ENCODE measurements at regions of chr19 and their contacts with region 1.

Region 1: GRCh38 chr19:47243776-47244547 is 12.4 kb upstream of the CCDC9 start:
- DNase-seq: peak; percentile 85 to 91 (median 87)
- H3K4me3 ChIP-seq: peak overlapping the region; percentile 21 to 37
- H3K4me3 Mint-ChIP-seq: peak overlapping the region; percentile 63 to 89 (median 84)
- H3K27ac ChIP-seq: peak overlapping the region; percentile 40
- H3K27ac Mint-ChIP-seq: peak overlapping the region in 6 of 7 donors; percentile 86 to 99 (median 96)
- H3K4me1 ChIP-seq: peaks cover 48% of the 10 kb centered on the region
- H3K4me1 Mint-ChIP-seq: peaks cover 11 to 33% (median 22%) of the 10 kb centered on the region in 4 donors
- H3K27me3 ChIP-seq: no peaks in the 10 kb centered on the region
- H3K27me3 Mint-ChIP-seq: no peaks in the 10 kb centered on the region

Region 2: GRCh38 chr19:46076951-46077816 is 1166.8 kb before region 1 on chr19:
- CTCF ChIA-PET with region 1: no interaction called
- POLR2A ChIA-PET with region 1: no interaction called
- intact Hi-C with region 1: no loop called
- DNase-seq: peak in 3 of 5 donors; percentile 2 to 36 (median 12)
- H3K4me3 ChIP-seq: no peak overlapping the region
- H3K4me3 Mint-ChIP-seq: peak overlapping the region in 4 of 8 donors; percentile 27 to 50 (median 30)
- H3K27ac ChIP-seq: no peak overlapping the region
- H3K27ac Mint-ChIP-seq: peak overlapping the region in 1 of 7 donors; percentile 31
- H3K4me1 ChIP-seq: peaks cover 12% of the 10 kb centered on the region
- H3K4me1 Mint-ChIP-seq: peaks cover 4 to 10% (median 6%) of the 10 kb centered on the region in 4 donors
- H3K27me3 ChIP-seq: peaks cover 16% of the 10 kb centered on the region
- H3K27me3 Mint-ChIP-seq: peaks cover 59% of the 10 kb centered on the region in 2 donors

Region 3: GRCh38 chr19:46860125-46860845 is 383.7 kb before region 1 on chr19:
- CTCF ChIA-PET with region 1: no interaction called
- POLR2A ChIA-PET with region 1: no interaction called
- intact Hi-C with region 1: loop called (anchors 5 kb)
- DNase-seq: peak; percentile 93 to 96 (median 94)
- H3K4me3 ChIP-seq: peak overlapping the region; percentile 42 to 78
- H3K4me3 Mint-ChIP-seq: peak overlapping the region; percentile 91 to 98 (median 95)
- H3K27ac ChIP-seq: peak overlapping the region; percentile 79
- H3K27ac Mint-ChIP-seq: peak overlapping the region; percentile 94 to 99 (median 97)
- H3K4me1 ChIP-seq: peaks cover 62% of the 10 kb centered on the region
- H3K4me1 Mint-ChIP-seq: peaks cover 19 to 22% (median 19%) of the 10 kb centered on the region in 4 donors
- H3K27me3 ChIP-seq: no peaks in the 10 kb centered on the region
- H3K27me3 Mint-ChIP-seq: no peaks in the 10 kb centered on the region

Region 4: GRCh38 chr19:47130591-47131227 is 113.3 kb before region 1 on chr19 and contains the start of gene SAE1:
- CTCF ChIA-PET with region 1: interaction called, 199 read pairs
- POLR2A ChIA-PET with region 1: interaction called, 17 read pairs
- intact Hi-C with region 1: loop called (anchors 1 kb)
- DNase-seq: peak; percentile 88 to 91 (median 90)
- H3K4me3 ChIP-seq: peak within 1 kb of the TSS; percentile 82 to 89
- H3K4me3 Mint-ChIP-seq: peak within 1 kb of the TSS; percentile 97 to 100 (median 100)
- H3K27ac ChIP-seq: peak within 1 kb of the TSS; percentile 73
- H3K27ac Mint-ChIP-seq: peak within 1 kb of the TSS; percentile 93 to 99 (median 98)
- H3K4me1 ChIP-seq: peaks cover 43% of the 10 kb centered on the region
- H3K4me1 Mint-ChIP-seq: peaks cover 33 to 55% (median 44%) of the 10 kb centered on the region in 4 donors
- H3K27me3 ChIP-seq: no peaks in the 10 kb centered on the region
- H3K27me3 Mint-ChIP-seq: no peaks in the 10 kb centered on the region
- total RNA-seq, gene SAE1: 35.3 to 36.0 TPM

Region 5: GRCh38 chr19:47157431-47158321 is 86.3 kb before region 1 on chr19:
- CTCF ChIA-PET with region 1: interaction called, 609 read pairs
- POLR2A ChIA-PET with region 1: interaction called, 46 read pairs
- intact Hi-C with region 1: no loop called
- DNase-seq: peak; percentile 45 to 56 (median 53)
- H3K4me3 ChIP-seq: peak overlapping the region; percentile 17 to 40
- H3K4me3 Mint-ChIP-seq: peak overlapping the region; percentile 62 to 90 (median 84)
- H3K27ac ChIP-seq: peak overlapping the region; percentile 43
- H3K27ac Mint-ChIP-seq: peak overlapping the region; percentile 76 to 98 (median 95)
- H3K4me1 ChIP-seq: peaks cover 75% of the 10 kb centered on the region
- H3K4me1 Mint-ChIP-seq: peaks cover 40 to 74% (median 60%) of the 10 kb centered on the region in 4 donors
- H3K27me3 ChIP-seq: no peaks in the 10 kb centered on the region
- H3K27me3 Mint-ChIP-seq: no peaks in the 10 kb centered on the region

Region 6: GRCh38 chr19:47203254-47203653 is 40.7 kb before region 1 on chr19:
- CTCF ChIA-PET with region 1: interaction called, 499 read pairs
- POLR2A ChIA-PET with region 1: interaction called, 6 read pairs
- intact Hi-C with region 1: no loop called
- DNase-seq: no peak
- H3K4me3 ChIP-seq: no peak overlapping the region
- H3K4me3 Mint-ChIP-seq: no peak overlapping the region
- H3K27ac ChIP-seq: no peak overlapping the region
- H3K27ac Mint-ChIP-seq: peak overlapping the region in 2 of 7 donors; percentile 10 to 26
- H3K4me1 ChIP-seq: no peaks in the 10 kb centered on the region
- H3K4me1 Mint-ChIP-seq: peaks cover 2 to 12% (median 9%) of the 10 kb centered on the region in 4 donors
- H3K27me3 ChIP-seq: no peaks in the 10 kb centered on the region
- H3K27me3 Mint-ChIP-seq: no peaks in the 10 kb centered on the region

Region 7: DNA sequence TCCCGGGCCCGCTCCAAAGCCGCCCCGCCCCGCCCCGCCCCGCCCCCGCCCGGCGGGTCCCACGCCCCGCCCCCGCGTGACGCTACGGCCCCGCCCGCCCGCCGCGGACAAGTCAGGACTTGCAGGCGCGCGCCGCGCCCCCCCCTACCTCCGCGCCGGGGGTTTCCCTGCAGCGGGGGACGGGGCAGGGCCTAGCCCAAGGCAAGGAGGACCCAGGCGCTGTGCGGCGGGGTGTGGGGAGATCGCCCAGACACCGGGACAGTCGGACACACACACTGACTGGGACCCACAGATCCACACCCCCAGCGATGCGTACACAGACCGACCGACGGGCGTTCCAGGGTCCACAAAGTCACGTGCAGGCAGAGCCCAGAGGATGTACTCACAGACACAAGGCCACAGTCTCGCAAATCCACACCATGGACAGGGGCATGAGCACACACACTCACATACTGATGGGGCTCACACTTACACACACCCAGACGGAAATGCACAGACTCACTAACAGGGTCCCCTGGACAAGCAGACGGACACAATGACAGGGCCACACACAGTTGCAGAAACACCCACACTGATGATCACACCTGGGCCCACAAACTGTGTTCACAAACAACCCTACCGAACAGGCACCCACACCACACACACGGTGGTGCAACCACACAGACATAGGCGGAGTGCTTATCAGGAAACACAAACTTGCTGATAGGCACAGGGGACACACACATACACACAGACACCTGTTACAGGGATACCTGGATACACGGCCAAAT is 12.6 kb before region 1 on chr19:
- CTCF ChIA-PET with region 1: interaction called, 62 read pairs
- POLR2A ChIA-PET with region 1: interaction called, 156 read pairs
- intact Hi-C with region 1: loop called (anchors 1 kb)
- DNase-seq: peak; percentile 88 to 96 (median 90)
- H3K4me3 ChIP-seq: peak overlapping the region in 1 of 2 donors; percentile 53
- H3K4me3 Mint-ChIP-seq: peak overlapping the region; percentile 73 to 88 (median 83)
- H3K27ac ChIP-seq: peak overlapping the region; percentile 76
- H3K27ac Mint-ChIP-seq: peak overlapping the region; percentile 71 to 97 (median 93)
- H3K4me1 ChIP-seq: peaks cover 51% of the 10 kb centered on the region
- H3K4me1 Mint-ChIP-seq: peaks cover 15 to 32% (median 22%) of the 10 kb centered on the region in 4 donors
- H3K27me3 ChIP-seq: no peaks in the 10 kb centered on the region
- H3K27me3 Mint-ChIP-seq: no peaks in the 10 kb centered on the region

Region 8: DNA sequence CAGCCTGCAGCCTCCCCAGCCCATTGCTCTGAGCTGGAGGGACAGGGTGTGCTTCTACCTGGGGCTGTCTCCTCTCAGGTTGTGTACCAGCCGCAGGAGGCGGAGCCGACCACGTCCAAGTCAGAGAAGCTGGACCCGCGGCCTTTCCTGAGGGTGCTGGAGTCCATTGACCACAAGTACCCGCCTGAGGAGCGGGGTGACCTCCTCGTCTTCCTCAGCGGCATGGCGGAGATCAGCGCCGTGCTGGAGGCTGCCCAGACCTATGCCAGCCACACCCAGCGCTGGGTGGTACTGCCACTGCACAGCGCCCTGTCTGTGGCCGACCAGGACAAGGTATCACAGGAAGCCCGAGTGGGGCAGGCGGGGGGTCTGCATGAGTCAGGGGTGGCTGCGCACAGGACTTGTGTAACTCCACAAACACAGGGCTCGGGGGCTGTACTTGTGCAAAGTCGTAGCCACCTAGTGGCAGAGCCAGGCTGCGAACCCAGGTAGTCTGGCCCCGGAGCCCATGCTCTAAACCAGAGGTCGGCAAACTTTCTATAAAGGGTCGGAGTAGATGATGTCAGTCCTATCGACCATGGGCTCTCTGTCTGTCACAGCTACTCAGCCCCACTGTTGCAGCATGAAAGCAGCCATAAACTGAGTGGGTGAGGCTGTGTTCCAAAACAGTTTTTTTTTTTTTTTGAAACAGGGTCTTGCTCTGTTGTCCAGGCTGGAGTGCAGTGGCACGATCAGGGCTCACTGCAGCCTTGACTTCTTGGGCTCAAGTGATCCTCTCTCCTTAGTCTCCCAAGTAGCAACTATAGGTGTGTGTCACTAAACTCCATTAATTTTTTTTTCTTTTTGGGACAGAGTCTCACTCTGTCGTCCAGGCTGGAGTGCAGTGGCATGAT is 114.1 kb after region 1 on chr19:
- CTCF ChIA-PET with region 1: no interaction called
- POLR2A ChIA-PET with region 1: no interaction called
- intact Hi-C with region 1: no loop called
- DNase-seq: no peak
- H3K4me3 ChIP-seq: no peak overlapping the region
- H3K4me3 Mint-ChIP-seq: no peak overlapping the region
- H3K27ac ChIP-seq: no peak overlapping the region
- H3K27ac Mint-ChIP-seq: no peak overlapping the region
- H3K4me1 ChIP-seq: no peaks in the 10 kb centered on the region
- H3K4me1 Mint-ChIP-seq: peaks cover 0 to 22% (median 3%) of the 10 kb centered on the region in 4 donors
- H3K27me3 ChIP-seq: no peaks in the 10 kb centered on the region
- H3K27me3 Mint-ChIP-seq: no peaks in the 10 kb centered on the region

Measured in CD4-positive, alpha-beta memory T cell (primary cell).